ENCODE measurements at regions of chr14 and their contacts with region 1.

Region 1: DNA sequence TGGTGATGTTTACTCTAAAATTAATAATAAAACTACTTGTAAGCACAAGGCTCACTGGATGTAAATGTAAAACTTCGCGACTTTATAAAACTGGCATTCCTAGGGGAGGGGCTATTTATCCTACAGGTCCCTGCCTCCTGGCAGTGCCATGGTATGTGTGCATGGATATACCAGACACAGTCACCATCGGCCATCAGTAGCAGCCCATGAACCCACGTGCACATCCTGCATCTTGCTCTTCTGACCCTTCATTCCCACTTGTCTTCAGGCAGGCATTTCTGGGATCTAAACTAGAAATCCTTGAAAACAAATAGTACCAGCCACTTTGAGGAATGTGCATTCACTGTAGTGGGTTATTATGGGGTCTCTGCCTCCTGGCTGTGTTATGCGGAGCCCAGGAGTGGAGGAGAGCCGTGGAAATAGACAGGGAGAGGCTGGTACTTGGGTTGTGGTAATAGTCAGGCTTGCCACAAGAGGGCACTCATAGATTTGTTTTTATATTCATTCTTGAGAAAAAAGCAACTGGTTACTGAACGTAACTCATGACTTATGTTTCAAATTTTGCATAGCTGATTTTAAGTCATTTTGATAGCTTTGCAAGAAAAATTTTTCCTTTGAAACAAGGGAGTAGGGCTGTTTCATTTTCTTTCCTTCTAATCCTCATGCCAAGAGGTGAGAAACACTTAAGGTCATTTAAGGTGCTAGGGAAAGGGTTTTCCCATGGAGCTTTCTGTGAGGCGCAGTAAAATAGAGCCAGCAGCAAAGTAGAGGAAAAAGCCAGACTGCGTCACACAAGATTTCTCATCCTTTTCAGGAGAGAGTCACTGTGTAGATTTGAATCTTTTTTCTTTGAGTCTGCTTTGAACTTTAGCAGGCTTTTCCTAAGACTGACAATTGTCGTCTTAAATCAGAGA is 17.4 kb upstream of the GALNT16 start:
- DNase-seq: peak; percentile 74
- ATAC-seq: peak; percentile 90
- H3K4me3 ChIP-seq: no peak overlapping the region
- H3K27ac ChIP-seq: no peak overlapping the region
- H3K4me1 ChIP-seq: peaks cover 2% of the 10 kb centered on the region; the same call in 1 of the 2 replicates
- H3K27me3 ChIP-seq: no peaks in the 10 kb centered on the region
- CTCF ChIP-seq: peak; percentile 81
- POLR2A ChIP-seq: no peak
- RAD21 ChIP-seq: peak; percentile 79

Region 2: DNA sequence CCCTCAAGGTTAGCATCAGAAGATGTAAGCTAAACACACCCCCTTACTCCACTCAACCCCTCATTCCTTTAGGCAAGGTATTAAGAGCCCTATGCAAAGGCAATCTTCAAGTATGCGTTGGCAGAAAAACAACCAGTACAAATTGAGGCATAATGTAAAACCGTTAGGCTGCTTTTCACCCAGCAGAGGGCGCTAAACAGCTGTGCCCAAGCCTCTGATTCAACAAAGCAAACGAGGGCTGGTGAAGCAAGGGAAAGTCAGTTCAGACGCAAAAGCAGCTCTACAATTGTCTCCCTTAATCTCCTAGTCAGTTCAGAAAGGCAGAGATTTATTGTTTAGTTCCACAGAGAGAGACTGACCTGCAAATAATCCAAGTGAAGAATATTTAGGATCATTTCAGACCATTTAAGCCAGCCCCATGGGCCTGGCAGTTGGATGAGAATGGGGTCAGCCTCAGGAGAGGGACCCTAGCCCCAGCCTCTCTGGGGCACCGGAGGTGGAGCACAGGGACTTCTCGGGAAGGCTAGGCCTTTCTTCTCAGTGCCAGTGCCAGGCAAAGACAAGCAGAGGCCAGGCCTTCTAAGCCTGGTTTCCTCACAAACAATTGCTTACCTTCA is 113.2 kb before region 1 on chr14:
- CTCF ChIA-PET with region 1: no interaction called
- POLR2A ChIA-PET with region 1: no interaction called
- dilution Hi-C with region 1: no loop called
- in situ Hi-C with region 1: no loop called
- intact Hi-C with region 1: loop called (anchors 1 kb)
- DNase-seq: peak; percentile 88
- ATAC-seq: peak; percentile 82
- H3K4me3 ChIP-seq: no peak overlapping the region
- H3K27ac ChIP-seq: no peak overlapping the region
- H3K4me1 ChIP-seq: peaks cover 9% of the 10 kb centered on the region
- H3K27me3 ChIP-seq: no peaks in the 10 kb centered on the region
- CTCF ChIP-seq: peak; percentile 95
- POLR2A ChIP-seq: no peak
- RAD21 ChIP-seq: peak; percentile 92

Region 3: GRCh38 chr14:69317104-69317755 is 74.7 kb after region 1 on chr14:
- CTCF ChIA-PET with region 1: no interaction called
- POLR2A ChIA-PET with region 1: no interaction called
- dilution Hi-C with region 1: no loop called
- in situ Hi-C with region 1: no loop called
- intact Hi-C with region 1: no loop called
- DNase-seq: peak; percentile 98
- ATAC-seq: peak; percentile 97
- H3K4me3 ChIP-seq: no peak overlapping the region
- H3K27ac ChIP-seq: peak overlapping the region; percentile 14; the same call in 1 of the 2 replicates
- H3K4me1 ChIP-seq: peaks cover 11% of the 10 kb centered on the region
- H3K27me3 ChIP-seq: no peaks in the 10 kb centered on the region
- CTCF ChIP-seq: no peak
- POLR2A ChIP-seq: no peak
- RAD21 ChIP-seq: peak; percentile 21; the same call in 1 of the 2 replicates

Region 4: GRCh38 chr14:69346710-69347109 is 104.1 kb after region 1 on chr14:
- CTCF ChIA-PET with region 1: interaction called, 4 read pairs
- POLR2A ChIA-PET with region 1: no interaction called
- dilution Hi-C with region 1: no loop called
- in situ Hi-C with region 1: no loop called
- intact Hi-C with region 1: loop called (anchors 1 kb)
- DNase-seq: no peak
- ATAC-seq: peak; percentile 81
- H3K4me3 ChIP-seq: no peak overlapping the region
- H3K27ac ChIP-seq: no peak overlapping the region
- H3K4me1 ChIP-seq: no peaks in the 10 kb centered on the region
- H3K27me3 ChIP-seq: peaks cover 32% of the 10 kb centered on the region
- CTCF ChIP-seq: peak; percentile 59
- POLR2A ChIP-seq: no peak
- RAD21 ChIP-seq: peak; percentile 67

Region 5: DNA sequence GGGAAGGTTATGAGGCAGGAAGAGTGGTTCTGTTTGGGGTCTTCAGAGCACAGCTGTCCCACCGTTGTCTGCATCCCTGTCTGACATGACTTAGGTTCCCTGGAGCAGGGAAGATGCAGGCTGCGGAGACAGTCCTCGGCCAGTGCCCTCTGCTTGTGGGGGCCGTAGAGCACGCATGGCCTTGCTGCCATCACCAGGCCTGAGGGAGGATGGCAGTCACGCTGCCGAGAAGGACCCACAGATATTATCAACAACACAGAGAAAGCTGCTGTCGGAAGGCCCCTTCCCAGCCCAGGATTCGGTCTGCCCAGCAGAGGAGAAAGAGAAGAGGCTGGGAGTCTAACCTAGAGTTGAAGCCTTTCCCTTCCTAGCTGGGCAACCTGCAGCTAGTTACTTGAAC is 120.5 kb after region 1 on chr14:
- CTCF ChIA-PET with region 1: interaction called, 3 read pairs
- POLR2A ChIA-PET with region 1: no interaction called
- dilution Hi-C with region 1: no loop called
- in situ Hi-C with region 1: no loop called
- intact Hi-C with region 1: loop called (anchors 1 kb)
- DNase-seq: peak; percentile 33
- ATAC-seq: peak; percentile 99
- H3K4me3 ChIP-seq: no peak overlapping the region
- H3K27ac ChIP-seq: no peak overlapping the region
- H3K4me1 ChIP-seq: no peaks in the 10 kb centered on the region
- H3K27me3 ChIP-seq: peaks cover 2% of the 10 kb centered on the region
- CTCF ChIP-seq: peak; percentile 61
- POLR2A ChIP-seq: no peak
- RAD21 ChIP-seq: peak; percentile 79

Region 6: GRCh38 chr14:69398053-69398817 is 155.7 kb after region 1 on chr14 and contains the starts of genes ERH and SLC39A9:
- CTCF ChIA-PET with region 1: no interaction called
- POLR2A ChIA-PET with region 1: no interaction called
- dilution Hi-C with region 1: no loop called
- in situ Hi-C with region 1: no loop called
- intact Hi-C with region 1: loop called (anchors 2 kb)
- DNase-seq: peak; percentile 97
- ATAC-seq: peak; percentile 93
- H3K4me3 ChIP-seq: peak within 1 kb of the TSS; percentile 57
- H3K27ac ChIP-seq: peak within 1 kb of the TSS; percentile 94
- H3K4me1 ChIP-seq: peaks cover 1% of the 10 kb centered on the region; the same call in 1 of the 2 replicates
- H3K27me3 ChIP-seq: no peaks in the 10 kb centered on the region
- CTCF ChIP-seq: 0 out of 2 replicates have a peak, but pooled peaks have one; percentile 0
- POLR2A ChIP-seq: peak; percentile 93
- RAD21 ChIP-seq: no peak; the same call in 1 of the 2 replicates
- total RNA-seq, gene ERH: 64.2 and 189 TPM in 2 replicates
- total RNA-seq, gene SLC39A9: 137 and 168 TPM in 2 replicates

Region 7: DNA sequence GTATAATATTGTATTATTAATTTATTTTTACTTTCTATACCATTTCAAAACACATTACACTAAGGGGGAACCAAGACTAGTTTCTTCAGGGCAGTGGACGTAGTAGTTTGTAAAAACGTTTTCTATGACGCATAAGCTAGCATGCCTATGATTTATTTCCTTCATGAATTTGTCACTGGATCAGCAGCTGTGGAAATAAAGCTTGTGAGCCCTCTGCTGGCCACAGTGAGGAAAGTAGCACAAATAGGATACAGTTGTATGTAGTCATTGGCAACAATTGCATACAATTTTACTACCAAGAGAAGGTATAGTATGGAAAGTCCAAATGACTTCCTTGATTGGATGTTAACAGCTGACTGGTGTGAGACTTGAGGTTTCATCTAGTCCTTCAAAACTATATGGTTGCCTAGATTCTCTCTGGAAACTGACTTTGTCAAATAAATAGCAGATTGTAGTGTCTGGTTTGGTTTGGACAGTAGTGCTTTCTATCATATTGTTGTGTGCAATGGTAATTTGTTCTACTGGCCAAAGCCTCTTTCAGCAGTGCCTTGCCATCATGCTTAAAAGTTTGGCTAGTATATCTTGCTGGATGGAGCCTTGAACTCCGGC is 217.6 kb after region 1 on chr14:
- CTCF ChIA-PET with region 1: interaction called, 6 read pairs
- POLR2A ChIA-PET with region 1: no interaction called
- dilution Hi-C with region 1: no loop called
- in situ Hi-C with region 1: no loop called
- intact Hi-C with region 1: loop called (anchors 1 kb)
- DNase-seq: peak; percentile 95
- ATAC-seq: peak; percentile 75
- H3K4me3 ChIP-seq: no peak overlapping the region
- H3K27ac ChIP-seq: no peak overlapping the region
- H3K4me1 ChIP-seq: 0 out of 2 replicates have a peak, but pooled peaks cover 2% of the 10 kb centered on the region
- H3K27me3 ChIP-seq: no peaks in the 10 kb centered on the region
- CTCF ChIP-seq: peak; percentile 86
- POLR2A ChIP-seq: no peak
- RAD21 ChIP-seq: peak; percentile 84

Region 8: GRCh38 chr14:69574263-69574953 is 331.8 kb after region 1 on chr14 and contains the start of gene CCDC177:
- CTCF ChIA-PET with region 1: no interaction called
- POLR2A ChIA-PET with region 1: no interaction called
- dilution Hi-C with region 1: no loop called
- in situ Hi-C with region 1: no loop called
- intact Hi-C with region 1: loop called (anchors 2 kb)
- DNase-seq: peak; percentile 48
- ATAC-seq: peak; percentile 77
- H3K4me3 ChIP-seq: no peak within 1 kb of the TSS; the same call in 1 of the 2 replicates
- H3K27ac ChIP-seq: no peak within 1 kb of the TSS
- H3K4me1 ChIP-seq: peaks cover 3% of the 10 kb centered on the region; the same call in 1 of the 2 replicates
- H3K27me3 ChIP-seq: peaks cover 70% of the 10 kb centered on the region
- CTCF ChIP-seq: peak; percentile 80
- POLR2A ChIP-seq: no peak
- RAD21 ChIP-seq: peak; percentile 69
- total RNA-seq, gene CCDC177: not detected in 2 replicates